Activated CD4-positive, alpha-beta memory T cell treated with anti-CD3 and anti-CD28 coated beads for 36 hours (primary cell): ENCODE measurements at regions of chr5 and their contacts with region 1.

Region 1: GRCh38 chr5:151252762-151253604 is at the start of gene GM2A:
- DNase-seq: peak; percentile 99
- H3K4me3 Mint-ChIP-seq: peak within 1 kb of the TSS; percentile 84
- H3K27ac Mint-ChIP-seq: peak within 1 kb of the TSS; percentile 94
- H3K4me1 Mint-ChIP-seq: peaks cover 45% of the 10 kb centered on the region
- H3K27me3 Mint-ChIP-seq: no peaks in the 10 kb centered on the region
- total RNA-seq, gene GM2A: 28.7 to 29.1 TPM

Region 2: DNA sequence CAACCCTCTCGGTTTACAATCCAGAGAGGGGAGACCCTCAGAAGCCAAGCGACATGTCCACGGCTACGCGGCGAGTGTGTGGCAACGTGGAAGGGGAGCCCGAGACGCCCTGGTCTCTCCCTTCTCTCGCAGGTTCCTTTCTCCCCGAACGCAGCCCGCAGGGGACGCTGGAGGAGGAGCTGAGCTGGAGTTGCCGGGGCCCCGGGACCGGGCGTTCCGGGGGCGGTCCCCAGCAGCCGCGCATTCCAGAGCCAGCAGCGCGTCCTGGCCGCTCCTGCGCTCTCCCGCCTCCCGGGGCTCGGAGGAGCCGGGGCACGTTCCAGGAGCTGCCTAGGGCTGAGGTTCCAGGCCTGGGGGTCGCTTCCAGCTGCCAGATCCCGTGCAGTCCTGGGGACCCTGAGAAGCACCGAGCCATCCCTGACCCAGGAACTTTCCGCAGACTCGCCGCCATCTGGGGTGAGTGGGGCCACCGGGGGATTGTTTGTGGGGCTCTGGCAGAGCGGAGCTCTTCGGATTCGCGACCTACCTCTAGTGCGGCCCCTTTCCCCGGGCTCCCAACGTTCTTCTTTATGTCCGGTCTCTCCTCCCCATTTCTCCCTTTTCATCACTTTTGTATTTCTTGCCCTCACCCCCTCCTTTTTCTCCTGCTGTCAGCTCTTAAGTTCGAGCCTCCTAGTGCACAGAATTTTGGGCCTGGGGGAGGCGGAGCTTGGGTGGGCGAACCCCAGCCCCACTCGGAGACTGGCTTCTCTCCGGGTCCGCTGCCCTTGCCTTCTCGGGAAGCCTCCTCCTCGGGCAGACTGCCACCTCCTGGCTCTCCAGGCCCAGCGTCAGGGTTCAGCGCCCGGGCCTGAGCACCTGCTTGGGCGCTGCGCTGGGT is 474.2 kb before region 1 on chr5 and contains the start of gene SMIM3:
- CTCF ChIA-PET with region 1: no interaction called
- POLR2A ChIA-PET with region 1: no interaction called
- intact Hi-C with region 1: loop called (anchors 10 kb)
- DNase-seq: peak; percentile 84
- H3K4me3 Mint-ChIP-seq: peak within 1 kb of the TSS; percentile 99
- H3K27ac Mint-ChIP-seq: peak within 1 kb of the TSS; percentile 84
- H3K4me1 Mint-ChIP-seq: peaks cover 52% of the 10 kb centered on the region
- H3K27me3 Mint-ChIP-seq: no peaks in the 10 kb centered on the region
- total RNA-seq, gene SMIM3: 22.4 to 22.8 TPM

Region 3: GRCh38 chr5:151150471-151151262 is 102.3 kb before region 1 on chr5:
- CTCF ChIA-PET with region 1: interaction called, 4 read pairs
- POLR2A ChIA-PET with region 1: no interaction called
- intact Hi-C with region 1: loop called (anchors 1 kb)
- DNase-seq: peak; percentile 87
- H3K4me3 Mint-ChIP-seq: peak overlapping the region; percentile 36
- H3K27ac Mint-ChIP-seq: peak overlapping the region; percentile 90
- H3K4me1 Mint-ChIP-seq: peaks cover 94% of the 10 kb centered on the region
- H3K27me3 Mint-ChIP-seq: no peaks in the 10 kb centered on the region

Region 4: DNA sequence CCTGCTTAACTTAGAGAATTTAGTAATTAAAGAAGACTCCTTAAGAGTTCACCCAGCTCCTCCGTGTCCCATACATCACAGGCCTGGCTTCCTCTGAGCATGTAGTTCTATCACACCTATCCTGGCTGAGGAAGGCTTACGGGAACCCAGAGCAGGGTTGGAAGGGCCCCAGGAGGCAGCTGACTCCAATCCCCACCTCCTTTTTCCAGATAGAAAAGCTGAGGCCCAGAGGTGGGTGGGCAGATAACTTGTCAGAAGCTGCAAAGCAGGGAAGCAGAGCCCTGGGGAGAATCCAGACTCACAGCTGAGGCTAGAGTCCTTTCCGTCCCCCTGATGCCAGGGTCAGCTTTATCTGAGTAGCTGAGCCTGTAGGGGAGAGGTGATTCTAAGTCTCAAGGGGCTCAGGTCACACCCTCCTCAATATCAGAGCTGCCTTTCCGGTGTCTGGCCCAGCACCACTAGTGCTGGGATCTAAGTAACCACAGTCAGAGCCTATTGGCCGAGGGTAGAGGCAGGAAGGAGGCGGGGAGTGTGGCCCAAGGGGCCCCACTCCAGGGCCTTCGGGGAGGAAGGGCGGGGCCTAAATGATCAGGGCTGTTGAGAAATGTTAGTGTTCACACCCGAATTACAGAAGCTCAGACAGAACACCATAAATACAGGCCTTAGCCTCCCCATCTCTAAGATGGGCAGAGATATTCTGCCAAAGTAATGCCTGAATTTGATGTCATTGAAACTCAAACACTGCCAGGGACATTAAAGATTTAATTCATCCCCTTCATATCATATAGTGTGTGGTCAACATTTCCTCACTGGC is 39.0 kb before region 1 on chr5:
- CTCF ChIA-PET with region 1: interaction called, 3 read pairs
- POLR2A ChIA-PET with region 1: interaction called, 9 read pairs
- intact Hi-C with region 1: loop called (anchors 1 kb)
- DNase-seq: peak; percentile 94
- H3K4me3 Mint-ChIP-seq: peak overlapping the region; percentile 82
- H3K27ac Mint-ChIP-seq: peak overlapping the region; percentile 97
- H3K4me1 Mint-ChIP-seq: peaks cover 69% of the 10 kb centered on the region
- H3K27me3 Mint-ChIP-seq: no peaks in the 10 kb centered on the region

Region 5: DNA sequence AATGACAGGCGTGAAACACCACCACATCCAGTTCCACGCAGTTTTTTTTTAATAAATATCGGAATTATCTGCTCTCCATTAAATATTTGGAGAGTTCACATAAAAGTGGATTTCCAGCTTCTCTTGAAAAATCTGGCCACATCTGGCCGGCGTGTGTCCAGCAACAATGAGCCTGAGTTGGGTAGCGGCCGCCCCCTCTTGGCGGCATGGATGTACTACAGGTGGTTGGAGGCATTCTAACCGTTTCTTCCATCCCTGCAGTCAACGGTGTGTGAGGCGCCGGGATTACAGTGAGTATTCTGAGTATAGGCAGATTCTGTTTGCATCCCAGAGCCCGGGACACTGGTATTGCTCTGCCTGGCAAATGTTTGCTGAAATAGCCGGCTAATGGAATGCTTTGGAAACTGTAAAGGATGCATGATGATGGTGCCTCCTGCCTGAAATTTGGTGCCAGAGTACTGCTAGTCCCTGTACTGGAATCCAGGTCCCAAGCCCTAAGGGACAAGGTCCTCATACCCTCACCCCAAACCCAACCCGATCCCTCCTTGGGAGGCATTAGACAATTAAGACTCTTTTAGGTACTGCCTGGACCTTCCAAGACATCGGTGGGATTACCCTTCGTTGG is 13.6 kb before region 1 on chr5:
- CTCF ChIA-PET with region 1: interaction called, 5 read pairs
- POLR2A ChIA-PET with region 1: no interaction called
- intact Hi-C with region 1: loop called (anchors 1 kb)
- DNase-seq: peak; percentile 67
- H3K4me3 Mint-ChIP-seq: no peak overlapping the region
- H3K27ac Mint-ChIP-seq: no peak overlapping the region
- H3K4me1 Mint-ChIP-seq: peaks cover 26% of the 10 kb centered on the region
- H3K27me3 Mint-ChIP-seq: no peaks in the 10 kb centered on the region

Region 6: DNA sequence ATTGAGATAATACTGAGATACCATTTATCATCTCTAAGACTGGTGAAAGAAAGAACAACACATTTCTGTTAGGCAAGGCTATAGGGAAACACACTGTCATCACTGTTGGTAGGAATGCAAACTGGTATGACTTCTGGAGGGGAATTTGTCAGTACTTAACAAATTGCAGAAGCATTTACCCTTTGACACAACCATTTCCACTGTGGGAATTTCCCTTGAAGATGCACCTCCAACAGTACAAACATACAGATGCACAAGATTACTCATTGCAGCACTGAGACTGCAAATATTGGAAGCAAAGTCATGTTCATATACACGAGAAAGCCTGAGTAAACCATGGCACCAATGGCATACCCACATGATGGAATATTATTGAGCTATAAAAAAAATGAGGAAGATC is 17.6 kb after region 1 on chr5:
- CTCF ChIA-PET with region 1: interaction called, 3 read pairs
- POLR2A ChIA-PET with region 1: interaction called, 3 read pairs
- intact Hi-C with region 1: loop called (anchors 1 kb)
- DNase-seq: no peak
- H3K4me3 Mint-ChIP-seq: no peak overlapping the region
- H3K27ac Mint-ChIP-seq: no peak overlapping the region
- H3K4me1 Mint-ChIP-seq: no peaks in the 10 kb centered on the region
- H3K27me3 Mint-ChIP-seq: no peaks in the 10 kb centered on the region